PC-3 (cell line): ENCODE measurements at regions of chr5 and their contacts with region 1.

Region 1: GRCh38 chr5:143824851-143825720 is 13.1 kb downstream of the HMHB1 start:
- DNase-seq: peak; percentile 83
- ATAC-seq: peak; percentile 68
- H3K4me3 ChIP-seq: no peak overlapping the region
- H3K27ac ChIP-seq: no peak overlapping the region
- H3K4me1 ChIP-seq: peaks cover 18% of the 10 kb centered on the region
- H3K27me3 ChIP-seq: no peaks in the 10 kb centered on the region
- CTCF ChIP-seq: peak; percentile 87

Region 2: DNA sequence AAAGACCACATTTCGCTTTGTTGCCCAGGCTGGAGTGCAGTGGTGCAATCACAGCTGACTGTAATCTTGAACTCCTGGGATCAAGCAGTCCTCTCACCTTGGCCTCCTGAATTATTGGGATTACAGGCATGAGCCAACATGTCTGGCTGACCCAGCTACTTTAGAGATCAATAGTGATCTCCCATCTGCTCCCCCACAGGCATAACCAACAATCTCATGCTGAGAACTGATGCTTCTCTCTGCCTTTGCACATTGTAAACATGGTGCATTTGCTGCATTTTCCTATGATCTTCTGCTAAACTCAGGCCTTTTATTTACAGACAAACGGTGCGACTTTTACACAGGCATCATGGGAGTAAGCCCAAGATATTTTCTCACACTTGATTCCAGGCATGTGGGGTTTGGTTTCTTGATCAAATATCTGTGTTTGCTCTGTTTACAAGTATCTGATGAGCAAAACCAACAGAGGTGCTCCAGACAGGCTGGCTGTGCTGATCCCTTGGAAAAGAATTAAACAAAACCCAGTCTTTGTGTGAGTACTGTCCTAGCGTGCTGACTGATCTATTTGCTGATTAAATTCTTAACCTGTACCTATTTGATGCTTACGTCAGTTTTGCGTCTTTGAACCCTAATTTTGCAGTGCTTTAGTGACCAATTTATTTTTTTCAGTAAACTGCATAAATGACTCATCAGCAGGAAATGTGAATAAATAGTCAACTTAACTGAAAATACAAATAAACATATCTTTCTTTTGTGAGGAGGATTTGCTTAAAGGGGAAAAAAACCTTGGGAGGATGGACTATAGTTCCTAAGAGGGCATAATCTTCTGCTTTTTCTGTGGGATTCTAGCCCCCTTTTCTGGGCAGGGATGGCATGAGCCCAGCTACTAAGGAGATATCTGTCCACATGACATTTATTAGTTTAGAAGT is 229.9 kb before region 1 on chr5:
- CTCF ChIA-PET with region 1: no interaction called
- POLR2A ChIA-PET with region 1: no interaction called
- intact Hi-C with region 1: loop called (anchors 5 kb)
- DNase-seq: peak; percentile 80
- ATAC-seq: peak; percentile 89
- H3K4me3 ChIP-seq: peak overlapping the region; percentile 41; the same call in 1 of the 2 replicates
- H3K27ac ChIP-seq: peak overlapping the region; percentile 100
- H3K4me1 ChIP-seq: peaks cover 28% of the 10 kb centered on the region
- H3K27me3 ChIP-seq: no peaks in the 10 kb centered on the region
- CTCF ChIP-seq: 0 out of 2 replicates have a peak, but pooled peaks have one; percentile 13

Region 3: GRCh38 chr5:143896966-143897365 is 71.9 kb after region 1 on chr5:
- CTCF ChIA-PET with region 1: no interaction called
- POLR2A ChIA-PET with region 1: no interaction called
- intact Hi-C with region 1: loop called (anchors 2 kb)
- DNase-seq: peak; percentile 49
- ATAC-seq: peak; percentile 48
- H3K4me3 ChIP-seq: no peak overlapping the region
- H3K27ac ChIP-seq: peak overlapping the region; percentile 73
- H3K4me1 ChIP-seq: peaks cover 36% of the 10 kb centered on the region
- H3K27me3 ChIP-seq: no peaks in the 10 kb centered on the region
- CTCF ChIP-seq: no peak

Region 4: GRCh38 chr5:143923634-143924255 is 98.7 kb after region 1 on chr5:
- CTCF ChIA-PET with region 1: no interaction called
- POLR2A ChIA-PET with region 1: no interaction called
- intact Hi-C with region 1: loop called (anchors 2 kb)
- DNase-seq: peak; percentile 60
- ATAC-seq: peak; percentile 72
- H3K4me3 ChIP-seq: peak overlapping the region; percentile 43; the same call in 1 of the 2 replicates
- H3K27ac ChIP-seq: peak overlapping the region; percentile 95
- H3K4me1 ChIP-seq: peaks cover 53% of the 10 kb centered on the region
- H3K27me3 ChIP-seq: no peaks in the 10 kb centered on the region
- CTCF ChIP-seq: no peak

Region 5: DNA sequence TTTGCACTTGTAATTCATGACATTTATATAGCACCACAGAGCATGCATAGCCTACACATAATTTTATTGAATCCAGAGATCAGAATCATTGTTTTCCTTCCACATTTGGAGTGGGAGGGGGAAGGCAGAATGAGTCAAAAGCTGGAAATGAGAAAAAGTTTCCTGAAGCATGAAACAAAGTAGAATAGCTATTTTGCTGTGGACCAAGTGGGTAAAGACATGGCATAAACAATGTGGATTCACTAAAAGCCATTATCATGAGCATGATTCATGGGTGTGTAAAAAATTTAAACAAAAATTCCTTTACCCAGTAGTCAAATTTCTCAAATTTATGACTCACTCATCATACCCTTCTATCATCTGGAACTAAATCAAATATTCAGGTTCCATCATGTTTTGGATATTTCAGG is 247.4 kb after region 1 on chr5:
- CTCF ChIA-PET with region 1: no interaction called
- POLR2A ChIA-PET with region 1: no interaction called
- intact Hi-C with region 1: loop called (anchors 1 kb)
- DNase-seq: peak; percentile 84
- ATAC-seq: peak; percentile 92
- H3K4me3 ChIP-seq: no peak overlapping the region
- H3K27ac ChIP-seq: peak overlapping the region; percentile 87
- H3K4me1 ChIP-seq: peaks cover 17% of the 10 kb centered on the region
- H3K27me3 ChIP-seq: no peaks in the 10 kb centered on the region
- CTCF ChIP-seq: no peak